ENCODE measurements at regions of chr2 and their contacts with region 1.

Region 1: GRCh38 chr2:153808679-153809078 is 63.0 kb upstream of the GALNT13 start:
- DNase-seq: no peak
- ATAC-seq: no peak
- H3K4me3 ChIP-seq: no peak overlapping the region
- H3K27ac ChIP-seq: no peak overlapping the region
- H3K4me1 ChIP-seq: no peaks in the 10 kb centered on the region
- H3K27me3 ChIP-seq: no peaks in the 10 kb centered on the region

Region 2: GRCh38 chr2:155250800-155251199 is 1442.1 kb after region 1 on chr2:
- intact Hi-C with region 1: loop called in 1 of 2 experiments (anchors 5 kb)
- DNase-seq: no peak
- ATAC-seq: no peak
- H3K4me3 ChIP-seq: no peak overlapping the region
- H3K27ac ChIP-seq: no peak overlapping the region
- H3K4me1 ChIP-seq: no peaks in the 10 kb centered on the region
- H3K27me3 ChIP-seq: no peaks in the 10 kb centered on the region

Region 3: GRCh38 chr2:155266583-155266982 is 1457.9 kb after region 1 on chr2:
- intact Hi-C with region 1: no loop called
- DNase-seq: no peak
- ATAC-seq: peak; percentile 11
- H3K4me3 ChIP-seq: no peak overlapping the region
- H3K27ac ChIP-seq: no peak overlapping the region
- H3K4me1 ChIP-seq: no peaks in the 10 kb centered on the region
- H3K27me3 ChIP-seq: no peaks in the 10 kb centered on the region

Measured in aorta (tissue), 5 donors.